A673 (cell line): ENCODE measurements at regions of chr11 and their contacts with region 1.

Region 1: GRCh38 chr11:31397239-31397834 is 27.7 kb downstream of the DNAJC24 start:
- DNase-seq: peak; percentile 69
- H3K4me3 ChIP-seq: no peak overlapping the region
- H3K27ac ChIP-seq: no peak overlapping the region
- H3K4me1 ChIP-seq: no peaks in the 10 kb centered on the region
- H3K27me3 ChIP-seq: no peaks in the 10 kb centered on the region
- CTCF ChIP-seq: peak; percentile 99

Region 2: GRCh38 chr11:32006799-32007388 is 609.6 kb after region 1 on chr11:
- CTCF ChIA-PET with region 1: interaction called, 3 read pairs
- POLR2A ChIA-PET with region 1: no interaction called
- intact Hi-C with region 1: loop called (anchors 5 kb)
- DNase-seq: peak; percentile 89
- H3K4me3 ChIP-seq: no peak overlapping the region
- H3K27ac ChIP-seq: no peak overlapping the region
- H3K4me1 ChIP-seq: no peaks in the 10 kb centered on the region
- H3K27me3 ChIP-seq: peaks cover 91% of the 10 kb centered on the region
- CTCF ChIP-seq: peak; percentile 100